HEK293 (cell line): ENCODE measurements at regions of chr11 and their contacts with region 1.

Region 1: DNA sequence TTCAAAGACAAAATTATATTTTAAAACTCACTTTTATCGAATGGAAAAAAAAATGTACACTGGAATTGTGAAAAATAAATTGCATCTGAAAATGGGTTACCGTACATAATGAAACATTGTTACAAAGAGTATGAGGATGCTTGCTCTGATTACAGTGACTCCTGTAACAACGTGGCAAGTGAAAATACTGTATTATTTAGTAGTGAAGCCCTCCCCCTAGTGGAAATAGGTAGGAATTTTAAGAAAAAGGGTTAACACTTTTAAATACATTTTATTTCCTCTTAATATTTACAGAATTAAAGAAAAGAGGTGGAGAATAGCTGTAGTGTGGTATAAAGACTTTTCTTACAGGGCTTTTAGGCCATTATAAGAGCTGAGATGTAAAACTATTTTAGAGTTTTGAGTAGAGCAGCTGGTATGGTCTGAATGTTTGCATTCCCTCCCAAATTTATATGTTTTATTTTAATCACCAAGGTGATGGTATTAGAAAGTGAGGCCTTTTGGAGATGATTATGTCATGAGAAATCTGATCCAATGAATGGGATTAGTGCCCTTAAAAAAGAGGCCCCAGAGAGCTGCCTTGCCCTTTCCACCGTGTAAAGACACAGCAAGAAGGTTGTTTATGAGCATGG is 25.2 kb downstream of the FAM76B start:
- H3K4me3 ChIP-seq: no peak overlapping the region
- H3K27ac ChIP-seq: no peak overlapping the region
- H3K4me1 ChIP-seq: no peaks in the 10 kb centered on the region
- CTCF ChIP-seq: no peak

Region 2: DNA sequence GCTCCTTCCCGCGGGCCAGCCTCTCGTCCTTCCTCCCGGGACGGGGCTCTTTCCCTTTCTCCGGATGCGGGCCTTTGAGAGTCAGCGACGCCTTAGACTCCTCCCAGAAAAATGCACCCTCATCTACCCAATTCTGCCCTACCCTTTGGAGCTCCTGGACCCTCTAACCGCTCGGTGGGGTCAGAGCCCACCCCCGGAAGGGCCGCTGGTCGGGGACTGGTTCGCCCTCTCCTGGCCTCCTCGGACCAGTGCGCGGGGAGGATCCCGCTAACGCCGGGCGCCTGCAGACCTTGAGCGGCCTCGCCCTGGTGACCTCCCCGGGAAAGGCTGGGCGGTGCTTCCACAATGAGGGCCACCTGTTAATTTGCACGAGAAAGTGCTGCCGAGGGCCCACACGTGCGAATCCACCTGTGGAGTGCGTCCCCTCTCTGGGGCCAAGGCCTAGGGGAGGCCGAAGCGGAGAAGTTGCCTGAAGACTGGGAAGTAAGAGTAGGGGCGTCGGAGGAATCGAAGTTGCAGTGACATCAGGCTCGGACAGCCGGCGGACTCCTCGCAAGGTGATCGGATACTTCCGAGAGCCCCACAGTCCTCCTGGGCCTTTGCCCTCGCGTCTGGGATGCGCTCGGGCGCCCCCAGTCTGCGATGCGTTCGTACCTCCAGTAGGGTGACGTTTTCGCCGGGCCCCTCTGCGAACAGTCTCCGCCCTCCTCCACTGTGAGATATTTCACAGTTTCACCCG is 613.3 kb before region 1 on chr11:
- CTCF ChIA-PET with region 1: interaction called, 111 read pairs
- POLR2A ChIA-PET with region 1: no interaction called
- H3K4me3 ChIP-seq: peak overlapping the region; percentile 24
- H3K27ac ChIP-seq: no peak overlapping the region; the same call in 1 of the 2 replicates
- H3K4me1 ChIP-seq: no peaks in the 10 kb centered on the region; the same call in none of the 2 replicates
- CTCF ChIP-seq: peak; percentile 62; the same call in 1 of the 2 replicates

Region 3: DNA sequence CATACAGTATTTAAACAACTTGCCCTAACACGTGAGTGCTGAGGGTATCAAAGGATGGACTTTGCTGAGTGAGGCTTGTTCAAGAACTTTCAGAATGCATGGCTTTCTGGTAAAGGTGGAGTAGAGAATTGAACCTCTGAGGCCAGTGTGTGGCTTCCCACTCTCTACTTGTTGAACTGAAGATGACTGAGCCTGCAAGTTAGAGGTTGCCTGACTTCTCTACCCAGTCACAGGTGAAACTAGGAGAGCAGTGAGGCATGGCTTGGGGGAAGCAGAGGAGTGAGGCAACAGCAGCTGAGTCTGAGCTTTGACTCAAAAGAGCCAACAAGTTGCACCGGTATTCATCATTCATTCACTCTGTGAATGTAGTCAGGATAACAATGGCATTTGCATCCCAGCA is 277.0 kb before region 1 on chr11:
- CTCF ChIA-PET with region 1: no interaction called
- POLR2A ChIA-PET with region 1: no interaction called
- H3K4me3 ChIP-seq: no peak overlapping the region
- H3K27ac ChIP-seq: no peak overlapping the region
- H3K4me1 ChIP-seq: no peaks in the 10 kb centered on the region
- CTCF ChIP-seq: no peak

Region 4: GRCh38 chr11:95821640-95822039 is 57.3 kb after region 1 on chr11:
- CTCF ChIA-PET with region 1: no interaction called
- POLR2A ChIA-PET with region 1: no interaction called
- H3K4me3 ChIP-seq: no peak overlapping the region
- H3K27ac ChIP-seq: no peak overlapping the region
- H3K4me1 ChIP-seq: no peaks in the 10 kb centered on the region
- CTCF ChIP-seq: no peak

Region 5: DNA sequence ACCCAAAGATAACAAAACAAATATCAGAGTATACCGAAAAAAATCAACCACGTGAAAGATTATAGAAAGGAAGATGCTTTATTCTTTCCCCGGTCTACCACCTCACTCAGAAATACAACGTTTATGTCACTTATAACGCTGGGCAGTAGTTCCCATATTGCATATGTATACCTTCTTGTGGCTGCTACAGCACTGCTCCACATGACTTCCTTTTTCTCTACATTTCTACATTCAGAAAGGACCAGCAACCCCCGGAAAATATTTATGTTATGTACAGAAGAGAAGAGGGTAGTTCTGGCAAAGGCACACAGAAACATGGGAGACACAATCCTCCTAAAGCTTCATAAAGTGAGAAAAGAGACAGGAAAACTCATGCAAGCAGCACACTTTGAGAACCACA is 102.7 kb after region 1 on chr11:
- CTCF ChIA-PET with region 1: no interaction called
- POLR2A ChIA-PET with region 1: no interaction called
- H3K4me3 ChIP-seq: no peak overlapping the region
- H3K27ac ChIP-seq: no peak overlapping the region
- H3K4me1 ChIP-seq: no peaks in the 10 kb centered on the region
- CTCF ChIP-seq: no peak